MCF 10A (cell line): ENCODE measurements at regions of chr6 and their contacts with region 1.

Region 1: DNA sequence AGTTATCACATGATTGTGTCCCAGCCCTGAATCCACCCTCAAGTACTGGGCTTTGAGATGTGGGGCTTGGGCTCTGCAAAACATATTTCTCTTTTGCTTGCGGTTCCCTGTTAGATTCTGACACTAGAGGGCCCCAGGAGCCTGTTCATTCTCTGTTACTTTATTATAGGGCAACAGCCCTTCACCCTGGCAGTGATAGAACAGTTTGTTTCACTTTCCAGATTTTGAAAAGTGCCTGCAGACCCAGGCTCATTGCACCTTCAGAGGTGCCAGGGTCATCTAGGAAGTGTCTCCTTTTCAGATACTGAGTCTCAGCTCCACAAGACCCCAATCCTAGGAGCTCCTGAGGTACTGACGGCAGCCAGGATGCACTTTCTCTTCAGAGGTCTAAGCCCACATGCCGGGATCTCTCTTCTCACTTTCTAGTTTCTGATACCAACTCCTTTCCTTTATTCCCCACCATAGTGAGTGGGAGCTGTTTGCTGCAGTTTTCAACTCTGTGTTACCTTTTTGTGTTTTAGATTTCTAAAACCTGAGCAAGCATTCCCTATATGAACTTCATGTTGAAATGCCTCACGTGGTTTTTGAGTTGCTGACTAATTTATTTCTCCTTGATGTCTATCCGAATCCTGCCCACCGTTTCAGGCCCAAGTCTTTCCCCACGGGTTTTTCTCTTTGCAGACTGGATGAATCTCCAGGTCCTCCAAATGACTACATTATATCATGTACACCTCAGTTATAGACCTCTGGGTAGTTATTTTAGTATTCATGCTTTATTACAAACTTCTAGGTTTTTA is 10.9 kb downstream of the ABT1 start:
- DNase-seq: peak; percentile 72
- H3K4me3 Mint-ChIP-seq: peak overlapping the region; percentile 64
- H3K27ac Mint-ChIP-seq: peak overlapping the region; percentile 35
- H3K4me1 Mint-ChIP-seq: peaks cover 6% of the 10 kb centered on the region
- H3K27me3 Mint-ChIP-seq: no peaks in the 10 kb centered on the region
- CTCF ChIP-seq: peak; percentile 68

Region 2: DNA sequence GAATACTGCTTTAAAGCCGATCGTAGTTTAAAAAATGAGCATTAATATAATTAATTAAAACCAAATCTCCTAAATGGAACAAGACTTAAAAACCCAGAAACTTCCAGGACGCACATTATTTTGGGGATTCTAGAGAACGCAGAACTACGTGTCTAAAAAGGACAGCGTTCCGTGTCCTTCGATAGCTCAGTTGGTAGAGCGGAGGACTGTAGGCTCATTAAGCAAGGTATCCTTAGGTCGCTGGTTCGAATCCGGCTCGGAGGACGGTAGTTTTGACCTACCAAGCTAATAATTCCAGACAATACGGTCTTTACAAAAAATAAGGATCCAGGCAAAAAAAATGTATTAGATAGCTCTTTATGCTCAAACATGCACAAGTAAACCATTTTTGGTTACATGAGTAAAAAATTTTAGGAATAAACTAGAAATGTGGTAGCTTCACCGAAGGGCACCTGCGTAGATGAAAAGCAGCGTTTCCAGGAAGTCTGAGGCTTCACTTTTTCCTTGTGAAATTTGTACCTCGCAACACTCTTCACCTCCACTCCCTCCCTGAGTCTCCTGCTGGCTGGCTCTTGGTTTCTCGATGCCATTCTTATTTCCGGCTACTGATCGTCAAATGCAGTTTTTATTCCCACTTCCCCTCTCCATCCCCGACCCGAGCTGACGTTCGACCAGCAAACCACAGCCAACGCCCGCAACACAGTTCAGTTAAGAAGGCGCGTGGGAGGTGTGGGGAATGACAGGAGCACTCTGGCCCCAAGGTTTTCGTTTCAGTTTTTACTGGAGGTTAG is 30.5 kb before region 1 on chr6:
- CTCF ChIA-PET with region 1: no interaction called
- POLR2A ChIA-PET with region 1: no interaction called
- intact Hi-C with region 1: no loop called
- DNase-seq: peak; percentile 77
- H3K4me3 Mint-ChIP-seq: peak overlapping the region; percentile 74
- H3K27ac Mint-ChIP-seq: no peak overlapping the region
- H3K4me1 Mint-ChIP-seq: peaks cover 6% of the 10 kb centered on the region
- H3K27me3 Mint-ChIP-seq: peaks cover 2% of the 10 kb centered on the region
- CTCF ChIP-seq: no peak

Region 3: DNA sequence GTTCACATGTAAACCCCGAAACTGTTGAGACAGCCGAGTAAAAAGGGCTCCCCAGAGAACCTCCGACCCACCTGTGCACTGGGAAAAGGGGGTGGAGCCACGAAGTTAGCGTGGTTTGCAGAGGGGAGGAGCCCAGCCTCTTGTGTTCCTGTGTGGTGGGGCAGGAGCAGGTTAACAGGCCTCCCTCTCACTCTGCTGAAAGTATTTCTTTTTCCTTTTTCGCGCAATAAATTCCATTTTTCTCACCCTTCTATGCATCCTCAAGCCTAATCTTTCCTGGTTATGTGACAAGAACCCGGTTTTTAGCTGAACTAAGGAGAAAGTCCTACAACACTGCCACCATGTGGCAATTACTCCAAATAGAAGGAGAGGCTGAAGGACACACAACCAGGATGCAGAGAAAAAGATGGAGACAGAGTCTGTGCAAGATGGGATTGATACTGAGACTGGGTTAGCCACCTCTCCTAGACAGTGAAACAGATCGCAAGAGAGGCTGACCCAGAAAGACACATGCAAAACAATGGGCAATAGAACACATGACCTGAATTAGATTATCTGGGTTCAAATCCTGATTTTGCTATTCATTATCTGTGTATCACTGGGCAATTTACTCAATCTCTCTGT is 471.2 kb after region 1 on chr6:
- CTCF ChIA-PET with region 1: interaction called, 17 read pairs
- POLR2A ChIA-PET with region 1: interaction called, 4 read pairs
- intact Hi-C with region 1: loop called (anchors 1 kb)
- DNase-seq: peak; percentile 77
- H3K4me3 Mint-ChIP-seq: peak overlapping the region; percentile 69
- H3K27ac Mint-ChIP-seq: no peak overlapping the region
- H3K4me1 Mint-ChIP-seq: peaks cover 6% of the 10 kb centered on the region
- H3K27me3 Mint-ChIP-seq: peaks cover 24% of the 10 kb centered on the region
- CTCF ChIP-seq: peak; percentile 62

Region 4: DNA sequence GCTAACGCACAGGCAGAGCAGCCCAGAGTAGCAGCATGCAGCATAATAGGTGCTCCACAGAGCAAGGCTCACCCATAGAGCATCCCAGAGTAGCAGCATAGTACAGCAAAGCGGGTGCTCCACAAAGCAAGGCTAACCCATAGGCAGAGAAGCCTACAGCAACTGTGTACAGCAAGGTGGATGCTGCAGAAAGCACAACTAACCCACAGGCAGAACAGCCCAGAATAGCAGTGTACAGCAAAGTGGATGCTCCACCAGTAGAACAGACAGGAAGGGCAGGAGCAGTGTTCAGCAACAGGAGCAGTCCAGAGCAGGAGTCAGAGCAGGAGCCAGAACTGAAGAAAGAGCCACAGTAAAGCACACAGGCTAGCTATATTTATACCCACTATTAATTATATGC is 507.2 kb after region 1 on chr6:
- CTCF ChIA-PET with region 1: no interaction called
- POLR2A ChIA-PET with region 1: no interaction called
- intact Hi-C with region 1: no loop called
- DNase-seq: no peak
- H3K4me3 Mint-ChIP-seq: no peak overlapping the region
- H3K27ac Mint-ChIP-seq: no peak overlapping the region
- H3K4me1 Mint-ChIP-seq: no peaks in the 10 kb centered on the region
- H3K27me3 Mint-ChIP-seq: no peaks in the 10 kb centered on the region
- CTCF ChIP-seq: no peak

Region 5: DNA sequence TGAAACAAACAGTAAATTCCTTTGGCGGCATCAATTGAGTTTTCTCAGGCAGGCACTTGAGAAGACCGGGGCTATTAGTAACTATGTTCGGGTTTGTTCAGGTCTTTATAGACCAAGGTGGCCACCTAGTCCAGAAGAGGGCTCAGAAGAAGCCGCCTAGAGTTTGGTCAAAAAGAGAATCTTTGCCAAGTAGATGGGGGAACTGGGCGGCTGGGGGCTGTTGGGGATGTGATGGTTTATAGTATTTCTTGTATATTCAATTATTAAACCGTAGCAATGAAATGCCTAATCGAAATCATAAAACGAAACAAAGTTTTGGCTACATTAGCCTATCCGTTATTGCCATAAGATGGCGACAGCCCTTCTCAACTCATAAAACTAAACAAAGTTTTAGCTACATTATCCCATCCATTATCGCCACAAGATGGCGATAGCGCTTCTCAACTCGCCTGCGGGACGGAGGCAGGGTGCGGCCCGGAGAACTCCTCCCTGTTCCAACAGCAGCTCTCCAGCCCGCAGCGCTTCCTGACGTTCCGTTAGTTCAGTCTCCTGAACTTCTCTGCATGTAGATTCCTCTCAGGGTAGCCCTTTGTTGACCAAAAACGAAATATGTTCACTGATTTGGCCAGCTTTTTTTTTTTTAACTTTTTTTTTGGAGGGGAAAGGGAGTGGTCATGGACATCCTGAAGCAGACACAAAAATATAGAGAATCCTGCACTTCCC is 519.3 kb after region 1 on chr6:
- CTCF ChIA-PET with region 1: interaction called, 4 read pairs
- POLR2A ChIA-PET with region 1: interaction called, 5 read pairs
- intact Hi-C with region 1: loop called (anchors 1 kb)
- DNase-seq: peak; percentile 91
- H3K4me3 Mint-ChIP-seq: peak overlapping the region; percentile 71
- H3K27ac Mint-ChIP-seq: peak overlapping the region; percentile 54
- H3K4me1 Mint-ChIP-seq: peaks cover 7% of the 10 kb centered on the region
- H3K27me3 Mint-ChIP-seq: no peaks in the 10 kb centered on the region
- CTCF ChIP-seq: peak; percentile 66

Region 6: GRCh38 chr6:27157459-27158315 is 550.1 kb after region 1 on chr6:
- CTCF ChIA-PET with region 1: interaction called, 3 read pairs
- POLR2A ChIA-PET with region 1: no interaction called
- intact Hi-C with region 1: loop called (anchors 1 kb)
- DNase-seq: peak; percentile 66
- H3K4me3 Mint-ChIP-seq: peak overlapping the region; percentile 80
- H3K27ac Mint-ChIP-seq: peak overlapping the region; percentile 53
- H3K4me1 Mint-ChIP-seq: peaks cover 29% of the 10 kb centered on the region
- H3K27me3 Mint-ChIP-seq: no peaks in the 10 kb centered on the region
- CTCF ChIP-seq: peak; percentile 31

Region 7: GRCh38 chr6:27795697-27796494 is 1188.3 kb after region 1 on chr6:
- CTCF ChIA-PET with region 1: no interaction called
- POLR2A ChIA-PET with region 1: no interaction called
- intact Hi-C with region 1: loop called (anchors 5 kb)
- DNase-seq: peak; percentile 91
- H3K4me3 Mint-ChIP-seq: no peak overlapping the region
- H3K27ac Mint-ChIP-seq: no peak overlapping the region
- H3K4me1 Mint-ChIP-seq: peaks cover 5% of the 10 kb centered on the region
- H3K27me3 Mint-ChIP-seq: no peaks in the 10 kb centered on the region
- CTCF ChIP-seq: peak; percentile 79